ENCODE measurements at regions of chr2 and their contacts with region 1.

Region 1: GRCh38 chr2:4354678-4355077 is 651.3 kb downstream of the DCDC2C start:
- DNase-seq: peak; percentile 35 to 50
- H3K4me3 ChIP-seq: no peak overlapping the region
- H3K4me3 Mint-ChIP-seq: no peak overlapping the region
- H3K27ac Mint-ChIP-seq: no peak overlapping the region
- H3K4me1 ChIP-seq: no peaks in the 10 kb centered on the region
- H3K4me1 Mint-ChIP-seq: no peaks in the 10 kb centered on the region
- H3K27me3 ChIP-seq: no peaks in the 10 kb centered on the region
- H3K27me3 Mint-ChIP-seq: no peaks in the 10 kb centered on the region
- CTCF ChIP-seq: peak; percentile 24 to 40

Region 2: DNA sequence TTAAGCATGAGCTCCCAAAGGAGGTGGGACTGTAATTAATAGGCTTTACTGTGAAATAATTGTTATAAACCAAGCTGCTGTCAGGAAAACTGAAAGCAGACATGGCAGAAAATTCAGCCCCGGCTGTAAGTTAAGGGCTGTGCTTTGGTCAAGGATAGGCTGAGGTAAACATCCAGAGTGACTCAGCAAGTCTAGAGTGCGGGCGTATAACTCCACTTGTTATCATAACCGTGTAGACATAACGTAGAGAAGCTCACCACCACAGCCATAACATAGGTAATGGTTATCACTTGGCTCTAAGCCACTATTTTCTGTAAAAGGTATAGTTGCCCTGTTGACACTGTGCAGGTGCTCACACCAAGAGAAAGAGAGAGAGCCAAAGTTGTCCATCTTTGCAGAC is 334.5 kb before region 1 on chr2:
- CTCF ChIA-PET with region 1: no interaction called
- POLR2A ChIA-PET with region 1: no interaction called
- intact Hi-C with region 1: no loop called
- DNase-seq: no peak
- H3K4me3 ChIP-seq: no peak overlapping the region
- H3K4me3 Mint-ChIP-seq: no peak overlapping the region
- H3K27ac Mint-ChIP-seq: no peak overlapping the region
- H3K4me1 ChIP-seq: no peaks in the 10 kb centered on the region
- H3K4me1 Mint-ChIP-seq: no peaks in the 10 kb centered on the region
- H3K27me3 ChIP-seq: no peaks in the 10 kb centered on the region
- H3K27me3 Mint-ChIP-seq: no peaks in the 10 kb centered on the region
- CTCF ChIP-seq: no peak

Region 3: GRCh38 chr2:4420032-4420431 is 65.4 kb after region 1 on chr2:
- CTCF ChIA-PET with region 1: no interaction called
- POLR2A ChIA-PET with region 1: no interaction called
- intact Hi-C with region 1: no loop called
- DNase-seq: no peak
- H3K4me3 ChIP-seq: no peak overlapping the region
- H3K4me3 Mint-ChIP-seq: no peak overlapping the region
- H3K27ac Mint-ChIP-seq: no peak overlapping the region
- H3K4me1 ChIP-seq: no peaks in the 10 kb centered on the region
- H3K4me1 Mint-ChIP-seq: no peaks in the 10 kb centered on the region
- H3K27me3 ChIP-seq: no peaks in the 10 kb centered on the region
- H3K27me3 Mint-ChIP-seq: peaks cover 8% of the 10 kb centered on the region
- CTCF ChIP-seq: no peak

Region 4: GRCh38 chr2:4715069-4715468 is 360.4 kb after region 1 on chr2:
- CTCF ChIA-PET with region 1: no interaction called
- POLR2A ChIA-PET with region 1: no interaction called
- intact Hi-C with region 1: loop called (anchors 1 kb)
- DNase-seq: peak in 1 of 2 experiments; percentile 5
- H3K4me3 ChIP-seq: no peak overlapping the region
- H3K4me3 Mint-ChIP-seq: no peak overlapping the region
- H3K27ac Mint-ChIP-seq: no peak overlapping the region
- H3K4me1 ChIP-seq: no peaks in the 10 kb centered on the region
- H3K4me1 Mint-ChIP-seq: no peaks in the 10 kb centered on the region
- H3K27me3 ChIP-seq: no peaks in the 10 kb centered on the region
- H3K27me3 Mint-ChIP-seq: no peaks in the 10 kb centered on the region
- CTCF ChIP-seq: no peak

Region 5: DNA sequence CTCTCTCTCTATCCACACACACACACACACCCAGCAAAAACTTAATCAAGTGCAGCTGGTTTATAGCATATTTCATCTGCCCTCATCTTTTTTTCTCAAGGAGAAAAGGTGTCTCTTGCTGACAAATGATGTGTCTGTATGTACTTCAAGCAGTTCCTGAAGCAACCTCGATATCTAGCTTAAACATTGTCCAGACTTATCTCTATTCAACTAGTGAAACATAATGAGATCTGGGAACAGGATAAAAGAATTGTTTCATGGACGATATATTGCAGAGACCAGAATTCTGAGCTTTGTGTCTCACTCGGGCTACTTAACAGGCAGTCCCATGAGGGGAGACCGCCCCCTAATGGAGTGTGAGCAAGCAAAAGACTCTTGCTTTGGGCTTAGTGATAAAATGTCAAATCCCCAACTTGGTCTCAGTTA is 408.3 kb after region 1 on chr2:
- CTCF ChIA-PET with region 1: no interaction called
- POLR2A ChIA-PET with region 1: no interaction called
- intact Hi-C with region 1: loop called (anchors 5 kb)
- DNase-seq: peak in 1 of 2 experiments; percentile 18
- H3K4me3 ChIP-seq: no peak overlapping the region
- H3K4me3 Mint-ChIP-seq: no peak overlapping the region
- H3K27ac Mint-ChIP-seq: no peak overlapping the region
- H3K4me1 ChIP-seq: no peaks in the 10 kb centered on the region
- H3K4me1 Mint-ChIP-seq: no peaks in the 10 kb centered on the region
- H3K27me3 ChIP-seq: no peaks in the 10 kb centered on the region
- H3K27me3 Mint-ChIP-seq: no peaks in the 10 kb centered on the region
- CTCF ChIP-seq: peak; percentile 5 to 39

Measured in Caco-2 (cell line).